Thyroid gland (tissue), 4 donors: ENCODE measurements at regions of chr1 and their contacts with region 1.

Region 1: DNA sequence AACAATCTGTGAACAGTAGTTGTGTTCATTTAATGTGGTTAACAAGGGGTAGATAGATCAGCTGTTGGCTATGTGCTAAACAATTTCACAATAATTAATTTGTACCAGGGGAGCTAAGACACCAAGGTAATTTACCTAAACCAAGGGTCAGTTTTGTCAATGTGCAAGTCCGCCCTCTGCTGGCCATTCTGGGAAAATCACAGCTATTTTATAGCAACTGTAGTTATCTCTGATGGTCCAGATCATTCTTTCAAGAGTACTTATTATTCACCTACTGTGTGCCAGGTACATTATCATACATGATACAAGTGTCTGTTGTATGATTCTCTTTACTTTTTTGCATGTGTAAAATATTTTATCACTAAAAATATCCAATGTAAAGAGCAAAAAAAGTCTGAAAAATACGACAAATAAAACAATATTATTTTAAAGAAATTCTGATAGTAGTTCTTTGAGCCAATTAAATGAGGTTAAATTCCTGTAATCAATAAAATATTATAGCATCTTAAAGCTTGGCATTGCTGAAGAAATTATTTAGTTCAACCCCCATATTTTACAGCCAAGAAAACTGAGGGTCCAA is 312.3 kb upstream of the FAM78B start:
- DNase-seq: peak; percentile 43 to 57
- H3K4me3 ChIP-seq: no peak overlapping the region
- H3K27ac ChIP-seq: no peak overlapping the region
- H3K4me1 ChIP-seq: no peaks in the 10 kb centered on the region
- H3K27me3 ChIP-seq: no peaks in the 10 kb centered on the region
- CTCF ChIP-seq: peak; percentile 41 to 76 (median 56)
- POLR2A ChIP-seq: no peak

Region 2: GRCh38 chr1:165924117-165924516 is 555.0 kb before region 1 on chr1:
- intact Hi-C with region 1: loop called (anchors 5 kb)
- DNase-seq: no peak
- H3K4me3 ChIP-seq: no peak overlapping the region
- H3K27ac ChIP-seq: no peak overlapping the region
- H3K4me1 ChIP-seq: no peaks in the 10 kb centered on the region
- H3K27me3 ChIP-seq: no peaks in the 10 kb centered on the region
- CTCF ChIP-seq: no peak
- POLR2A ChIP-seq: no peak

Region 3: GRCh38 chr1:166302989-166303758 is 176.0 kb before region 1 on chr1:
- intact Hi-C with region 1: no loop called
- DNase-seq: no peak
- H3K4me3 ChIP-seq: no peak overlapping the region
- H3K27ac ChIP-seq: no peak overlapping the region
- H3K4me1 ChIP-seq: no peaks in the 10 kb centered on the region
- H3K27me3 ChIP-seq: no peaks in the 10 kb centered on the region
- CTCF ChIP-seq: no peak
- POLR2A ChIP-seq: no peak

Region 4: GRCh38 chr1:166365081-166365480 is 114.1 kb before region 1 on chr1:
- intact Hi-C with region 1: no loop called
- DNase-seq: no peak
- H3K4me3 ChIP-seq: no peak overlapping the region
- H3K27ac ChIP-seq: no peak overlapping the region
- H3K4me1 ChIP-seq: no peaks in the 10 kb centered on the region
- H3K27me3 ChIP-seq: no peaks in the 10 kb centered on the region
- CTCF ChIP-seq: no peak
- POLR2A ChIP-seq: no peak